BJ (cell line): ENCODE measurements at regions of chr1 and their contacts with region 1.

Region 1: DNA sequence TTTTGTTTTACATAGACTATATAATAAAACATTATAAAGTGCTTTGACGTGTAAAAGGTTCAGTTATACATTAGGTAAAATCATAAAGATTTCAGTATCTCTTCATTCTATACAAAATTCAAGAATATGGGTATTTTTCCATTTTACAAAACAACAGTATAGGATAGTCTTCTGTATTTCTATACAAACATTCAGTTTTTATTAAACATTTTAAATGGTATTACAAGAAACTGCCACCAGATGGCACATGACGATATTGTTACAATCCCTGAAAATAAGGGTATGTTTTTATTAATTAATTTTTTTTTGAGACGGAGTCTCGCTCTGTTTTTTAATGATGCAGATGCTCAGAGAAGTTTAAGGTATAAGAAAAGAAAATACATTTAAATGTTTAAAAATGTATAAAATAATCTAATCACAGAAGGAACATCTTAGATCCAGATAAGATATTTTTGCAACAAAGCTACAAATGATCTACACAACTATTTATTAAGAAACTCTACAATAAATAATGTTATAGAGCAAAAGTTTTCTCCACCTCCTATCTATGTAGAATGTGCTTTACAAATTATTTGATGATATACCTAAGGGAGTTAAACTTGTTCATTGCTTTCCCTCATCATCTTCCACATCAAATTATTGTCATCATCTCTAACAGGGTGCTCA is 23.5 kb upstream of the RSBN1 start:
- DNase-seq: no peak
- H3K4me3 ChIP-seq: no peak overlapping the region
- H3K27me3 ChIP-seq: no peaks in the 10 kb centered on the region
- CTCF ChIP-seq: peak; percentile 36; the same call in 1 of the 2 replicates

Region 2: DNA sequence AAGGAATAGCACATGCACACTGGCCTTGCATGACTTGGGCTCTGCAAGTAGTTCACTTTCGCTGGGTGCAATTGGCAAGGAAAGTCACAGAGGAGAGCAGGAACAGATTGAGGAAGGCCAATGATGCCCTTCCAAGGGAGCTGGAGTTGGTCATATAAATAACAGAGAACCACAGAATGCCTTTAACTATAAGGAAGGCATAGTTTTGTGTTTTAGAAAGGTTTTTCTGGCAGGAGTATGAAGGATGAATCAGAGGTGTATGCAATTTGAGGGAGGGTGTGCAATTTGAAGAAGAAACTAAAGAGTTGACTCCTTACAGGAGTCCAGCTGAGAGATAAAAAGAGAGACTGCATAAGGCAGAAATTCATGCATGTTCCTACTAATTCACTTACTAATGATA is 188.6 kb before region 1 on chr1:
- CTCF ChIA-PET with region 1: no interaction called
- POLR2A ChIA-PET with region 1: no interaction called
- DNase-seq: peak; percentile 9
- H3K4me3 ChIP-seq: no peak overlapping the region
- H3K27me3 ChIP-seq: no peaks in the 10 kb centered on the region
- CTCF ChIP-seq: no peak

Region 3: DNA sequence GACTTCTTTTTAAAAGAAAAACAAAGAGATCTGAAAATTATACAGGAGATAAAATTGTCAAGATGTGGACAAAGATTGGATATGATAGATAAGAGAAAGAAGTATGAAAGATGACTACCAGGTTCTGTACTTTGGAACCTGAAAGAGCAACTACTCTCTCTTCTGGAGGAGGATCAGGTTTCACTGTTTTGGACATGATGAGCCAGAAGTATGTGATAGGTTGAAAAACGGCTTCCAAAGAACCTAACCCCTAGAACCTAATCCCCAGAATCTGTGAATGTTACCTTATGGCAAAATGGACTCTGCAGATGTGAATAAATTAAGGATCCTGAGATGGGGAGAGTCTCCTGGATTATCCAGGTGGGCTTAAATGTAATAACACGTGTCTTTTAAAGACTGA is 49.7 kb before region 1 on chr1:
- CTCF ChIA-PET with region 1: no interaction called
- POLR2A ChIA-PET with region 1: no interaction called
- DNase-seq: no peak
- H3K4me3 ChIP-seq: no peak overlapping the region
- H3K27me3 ChIP-seq: no peaks in the 10 kb centered on the region
- CTCF ChIP-seq: no peak

Region 4: GRCh38 chr1:113866693-113867092 is 30.9 kb after region 1 on chr1:
- CTCF ChIA-PET with region 1: no interaction called
- POLR2A ChIA-PET with region 1: no interaction called
- DNase-seq: no peak
- H3K4me3 ChIP-seq: no peak overlapping the region
- H3K27me3 ChIP-seq: no peaks in the 10 kb centered on the region
- CTCF ChIP-seq: no peak

Region 5: DNA sequence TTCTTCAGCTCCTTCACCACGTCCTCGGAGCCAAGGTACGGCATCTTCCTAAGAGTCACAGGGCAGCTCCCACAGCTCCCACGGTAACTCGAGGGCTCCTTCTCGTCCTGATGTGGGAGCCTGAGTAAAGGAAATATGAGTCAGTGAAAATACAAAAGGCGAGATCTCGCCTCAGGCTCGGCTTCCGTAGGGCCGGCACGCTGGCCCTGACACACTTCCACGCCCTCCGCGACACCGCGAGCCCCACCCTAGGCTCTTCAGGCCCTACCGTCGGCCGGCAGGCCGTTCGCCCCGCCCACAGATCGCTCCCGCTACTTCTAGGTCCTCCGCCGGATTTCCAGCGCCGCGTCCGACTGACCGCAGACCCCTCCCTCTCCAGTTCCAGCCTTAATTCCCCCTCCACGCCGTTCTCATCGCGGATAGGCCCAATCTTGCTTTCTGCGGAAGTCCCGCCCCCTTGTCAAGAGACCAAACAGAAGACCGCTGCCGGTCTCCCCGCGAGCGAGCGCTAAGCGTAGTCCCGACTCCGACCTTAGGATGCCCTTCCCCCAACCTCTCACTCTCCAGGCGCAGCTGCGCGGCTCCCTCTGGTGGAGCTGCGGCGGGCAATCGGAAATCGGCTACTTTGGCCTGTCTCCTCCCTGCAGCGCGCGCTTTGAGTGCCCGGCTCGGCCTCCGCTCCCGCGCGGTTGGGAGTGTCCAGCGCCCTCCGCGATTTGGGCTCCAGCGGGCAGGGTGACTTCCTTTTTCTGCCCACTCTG is 69.1 kb after region 1 on chr1 and contains the starts of genes AP4B1 and DCLRE1B:
- CTCF ChIA-PET with region 1: interaction called, 20 read pairs
- POLR2A ChIA-PET with region 1: no interaction called
- DNase-seq: peak; percentile 99
- H3K4me3 ChIP-seq: peak within 1 kb of the TSS; percentile 51
- H3K27me3 ChIP-seq: no peaks in the 10 kb centered on the region
- CTCF ChIP-seq: peak; percentile 80
- polyA plus RNA-seq, gene AP4B1: 9.5 and 13.2 TPM in 2 replicates
- polyA plus RNA-seq, gene DCLRE1B: 3.4 and 4.5 TPM in 2 replicates

Region 6: GRCh38 chr1:113928941-113929749 is 93.4 kb after region 1 on chr1 and contains the start of gene HIPK1:
- CTCF ChIA-PET with region 1: interaction called, 26 read pairs
- POLR2A ChIA-PET with region 1: no interaction called
- DNase-seq: no peak
- H3K4me3 ChIP-seq: peak within 1 kb of the TSS; percentile 70
- H3K27me3 ChIP-seq: no peaks in the 10 kb centered on the region
- CTCF ChIP-seq: no peak
- polyA plus RNA-seq, gene HIPK1: 27.6 and 29.7 TPM in 2 replicates

Region 7: GRCh38 chr1:113963281-113963906 is 127.6 kb after region 1 on chr1:
- CTCF ChIA-PET with region 1: interaction called, 10 read pairs
- POLR2A ChIA-PET with region 1: no interaction called
- DNase-seq: no peak
- H3K4me3 ChIP-seq: no peak overlapping the region
- H3K27me3 ChIP-seq: no peaks in the 10 kb centered on the region
- CTCF ChIP-seq: no peak

Region 8: DNA sequence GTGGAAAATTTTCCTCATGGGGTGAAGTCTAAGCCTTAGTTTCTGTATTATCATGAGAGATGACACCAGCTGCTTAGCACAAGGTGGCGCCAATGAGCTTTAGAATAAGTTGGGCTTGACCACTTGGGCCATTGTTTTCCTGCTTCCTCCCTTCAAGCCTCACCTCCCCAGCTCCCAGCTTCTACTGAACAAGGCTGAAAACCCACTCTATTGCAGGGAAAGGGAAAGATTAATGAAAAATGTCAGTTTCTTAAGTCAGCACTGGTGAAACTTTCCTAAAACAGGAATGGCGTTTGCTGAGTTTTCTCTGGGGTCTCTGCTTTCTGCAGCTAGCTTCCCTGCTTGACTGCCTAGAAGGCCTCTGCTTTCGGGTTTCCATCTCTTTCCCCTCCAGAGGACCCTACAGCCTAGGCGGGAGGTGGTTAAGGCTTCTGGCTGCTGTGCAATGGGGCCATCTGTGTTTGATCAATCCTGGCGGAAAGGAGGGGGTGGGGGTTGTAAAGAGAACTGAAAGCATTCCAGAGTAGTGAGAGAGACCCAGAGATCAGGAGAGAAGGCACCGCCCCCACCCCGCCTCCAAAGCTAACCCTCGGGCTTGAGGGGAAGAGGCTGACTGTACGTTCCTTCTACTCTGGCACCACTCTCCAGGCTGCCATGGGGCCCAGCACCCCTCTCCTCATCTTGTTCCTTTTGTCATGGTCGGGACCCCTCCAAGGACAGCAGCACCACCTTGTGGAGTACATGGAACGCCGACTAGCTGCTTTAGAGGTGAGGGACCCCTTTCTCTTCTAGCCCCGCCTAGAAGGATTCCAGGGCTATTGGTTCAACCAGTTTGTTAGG is 143.3 kb after region 1 on chr1 and contains the start of gene OLFML3:
- CTCF ChIA-PET with region 1: interaction called, 10 read pairs
- POLR2A ChIA-PET with region 1: no interaction called
- DNase-seq: peak; percentile 89
- H3K4me3 ChIP-seq: peak within 1 kb of the TSS; percentile 45
- H3K27me3 ChIP-seq: no peaks in the 10 kb centered on the region
- CTCF ChIP-seq: peak; percentile 69
- polyA plus RNA-seq, gene OLFML3: 72.6 and 76.8 TPM in 2 replicates

Region 9: GRCh38 chr1:114063579-114063978 is 227.8 kb after region 1 on chr1:
- CTCF ChIA-PET with region 1: no interaction called
- POLR2A ChIA-PET with region 1: no interaction called
- DNase-seq: no peak
- H3K4me3 ChIP-seq: no peak overlapping the region
- H3K27me3 ChIP-seq: no peaks in the 10 kb centered on the region
- CTCF ChIP-seq: no peak

Region 10: GRCh38 chr1:114282751-114283403 is 447.1 kb after region 1 on chr1:
- CTCF ChIA-PET with region 1: interaction called, 11 read pairs
- POLR2A ChIA-PET with region 1: no interaction called
- DNase-seq: peak; percentile 16
- H3K4me3 ChIP-seq: no peak overlapping the region
- H3K27me3 ChIP-seq: peaks cover 3% of the 10 kb centered on the region; the same call in 1 of the 2 replicates
- CTCF ChIP-seq: peak; percentile 92